G401 (cell line): ENCODE measurements at regions of chr6 and their contacts with region 1.

Region 1: DNA sequence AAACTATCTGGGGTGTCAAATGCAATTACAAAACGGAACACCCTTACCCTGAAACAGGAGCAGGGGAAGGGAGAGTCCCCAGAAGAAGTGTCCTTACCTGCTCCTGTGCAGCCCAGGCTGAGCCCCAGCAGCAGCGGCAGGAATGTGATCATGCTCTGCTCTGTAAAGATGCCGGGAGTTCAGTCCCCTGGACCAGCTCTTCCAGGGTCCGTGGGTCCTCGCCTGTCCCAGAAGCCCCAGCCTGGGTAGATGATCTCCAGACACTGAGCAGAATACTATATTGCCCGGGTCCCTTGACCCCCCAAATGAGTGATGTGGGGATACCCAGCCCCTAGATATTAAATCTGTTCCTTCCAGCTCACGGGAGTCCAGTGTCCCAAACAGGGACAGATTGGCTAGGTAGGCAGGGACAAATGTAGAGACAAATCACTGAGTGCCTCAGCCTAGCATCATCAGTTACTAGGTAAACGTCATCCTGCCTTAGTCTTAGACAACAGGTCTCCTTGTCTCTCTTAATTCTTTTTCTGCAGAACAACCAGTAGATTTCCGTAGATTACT is at the start of gene HLA-DMB:
- DNase-seq: peak; percentile 83
- total RNA-seq, gene HLA-DMB: 3.2 and 8.0 TPM in 2 replicates

Region 2: DNA sequence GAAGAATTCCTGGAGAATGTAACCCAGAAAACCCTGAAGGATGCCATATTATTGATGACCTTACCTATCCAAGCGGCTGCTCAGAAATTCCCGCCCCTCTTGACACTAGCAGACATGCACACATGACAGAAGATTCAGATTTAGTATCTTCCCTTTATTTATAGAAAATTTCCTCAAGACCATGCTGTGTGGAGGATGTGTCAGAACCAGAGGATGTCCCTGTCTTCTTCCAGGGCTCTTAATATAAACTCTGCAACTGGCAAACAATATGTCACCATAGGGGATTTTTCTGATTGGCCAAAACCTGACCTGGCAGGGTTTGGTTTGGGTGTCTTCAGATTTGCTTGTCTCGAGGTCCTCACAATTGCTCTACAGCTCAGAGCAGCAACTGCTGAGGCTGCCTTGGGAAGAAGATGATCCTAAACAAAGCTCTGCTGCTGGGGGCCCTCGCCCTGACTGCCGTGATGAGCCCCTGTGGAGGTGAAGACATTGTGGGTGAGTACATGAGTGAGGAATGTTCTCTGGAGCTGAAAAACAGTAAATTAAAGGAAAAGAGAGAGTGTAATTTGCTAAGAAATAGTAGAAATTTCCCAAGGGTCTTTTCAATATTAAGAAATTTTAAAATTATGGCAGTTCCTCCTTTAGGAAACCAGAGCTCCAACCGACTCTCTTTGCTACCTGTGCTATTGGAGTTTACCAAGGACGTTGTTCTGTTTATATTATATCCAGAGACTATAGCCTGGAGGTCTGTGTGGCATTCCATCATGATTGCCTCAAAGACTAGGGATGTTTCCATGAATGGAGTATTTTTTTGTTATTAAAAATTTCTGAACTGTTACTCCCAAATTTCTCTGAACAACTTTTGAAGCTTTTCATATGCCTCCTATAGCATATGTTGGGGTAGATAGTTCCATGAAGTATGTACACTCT is 199.4 kb before region 1 on chr6 and contains the start of gene HLA-DQA2:
- in situ Hi-C with region 1: no loop called
- DNase-seq: no peak
- total RNA-seq, gene HLA-DQA2: not detected in 2 replicates

Region 3: GRCh38 chr6:32825966-32826365 is 114.8 kb before region 1 on chr6:
- in situ Hi-C with region 1: loop called (anchors 10 kb)
- DNase-seq: peak; percentile 34